ENCODE measurements at regions of chr5 and their contacts with region 1.

Region 1: DNA sequence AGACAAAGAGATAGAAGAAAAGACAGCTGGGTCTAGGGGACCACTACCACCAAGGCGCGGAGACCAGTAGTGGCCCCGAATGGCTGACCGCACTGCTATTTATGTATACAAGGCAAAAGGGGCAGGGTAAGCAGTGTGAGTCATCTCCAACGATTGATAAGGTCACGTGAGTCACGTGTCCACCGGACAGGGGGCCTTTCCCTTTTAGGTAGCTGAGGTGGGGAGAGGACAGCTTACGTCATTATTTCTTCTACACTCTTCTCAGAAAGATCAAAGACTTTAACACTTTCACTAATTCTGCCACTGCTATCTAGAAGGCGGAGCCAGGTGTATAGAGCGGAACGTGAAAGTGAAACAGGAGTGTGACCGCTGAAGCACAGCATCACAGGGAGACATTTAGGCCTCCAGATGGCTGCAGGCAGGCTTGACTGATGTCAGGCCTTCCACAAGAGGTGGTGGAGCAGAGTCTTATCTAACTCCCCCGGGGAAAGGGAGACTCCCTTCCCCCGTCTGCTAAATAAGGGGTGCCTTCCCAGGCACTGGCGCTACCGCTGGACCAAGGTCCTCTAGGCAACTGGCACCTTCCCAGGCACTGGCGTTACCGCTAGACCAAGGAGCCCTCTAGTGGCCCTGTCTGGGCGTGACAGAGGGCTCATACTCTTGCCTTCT is 6.1 kb upstream of the PRR16 start:
- DNase-seq: peak; percentile 52
- H3K4me3 ChIP-seq: peak overlapping the region in 1 of 3 experiments; percentile 17
- H3K27ac ChIP-seq: no peak overlapping the region
- H3K4me1 ChIP-seq: no peaks in the 10 kb centered on the region
- H3K27me3 ChIP-seq: no peaks in the 10 kb centered on the region
- CTCF ChIP-seq: peak; percentile 45 to 64
- POLR2A ChIP-seq: no peak

Region 2: GRCh38 chr5:119943148-119943547 is 514.8 kb before region 1 on chr5:
- CTCF ChIA-PET with region 1: no interaction called
- POLR2A ChIA-PET with region 1: no interaction called
- dilution Hi-C with region 1: no loop called
- intact Hi-C with region 1: loop called (anchors 1 kb)
- DNase-seq: peak; percentile 11
- H3K4me3 ChIP-seq: no peak overlapping the region
- H3K27ac ChIP-seq: no peak overlapping the region
- H3K4me1 ChIP-seq: no peaks in the 10 kb centered on the region
- H3K27me3 ChIP-seq: no peaks in the 10 kb centered on the region
- CTCF ChIP-seq: no peak
- POLR2A ChIP-seq: no peak

Region 3: DNA sequence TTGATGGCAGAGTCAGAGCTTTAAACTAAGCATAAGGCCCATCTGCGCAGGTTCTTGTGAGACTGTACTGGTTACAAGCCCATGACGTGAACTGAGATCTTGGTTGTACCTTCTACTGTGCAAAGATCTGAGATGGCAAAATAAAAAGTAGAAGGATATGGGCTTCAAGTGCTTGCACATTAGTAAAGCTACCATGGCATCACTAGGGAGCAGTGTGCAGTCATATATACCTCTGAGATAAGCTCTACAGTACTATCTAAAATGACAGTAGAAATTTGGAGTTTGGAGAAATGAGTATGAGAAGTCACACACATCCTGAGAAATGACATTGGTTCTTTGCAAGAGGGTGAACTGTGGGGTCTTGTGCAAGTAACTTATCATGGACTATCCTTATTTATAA is 402.1 kb before region 1 on chr5:
- CTCF ChIA-PET with region 1: interaction called, 20 read pairs
- POLR2A ChIA-PET with region 1: no interaction called
- dilution Hi-C with region 1: no loop called
- intact Hi-C with region 1: no loop called
- DNase-seq: peak; percentile 17
- H3K4me3 ChIP-seq: no peak overlapping the region
- H3K27ac ChIP-seq: no peak overlapping the region
- H3K4me1 ChIP-seq: no peaks in the 10 kb centered on the region
- H3K27me3 ChIP-seq: no peaks in the 10 kb centered on the region
- CTCF ChIP-seq: no peak
- POLR2A ChIP-seq: no peak

Region 4: DNA sequence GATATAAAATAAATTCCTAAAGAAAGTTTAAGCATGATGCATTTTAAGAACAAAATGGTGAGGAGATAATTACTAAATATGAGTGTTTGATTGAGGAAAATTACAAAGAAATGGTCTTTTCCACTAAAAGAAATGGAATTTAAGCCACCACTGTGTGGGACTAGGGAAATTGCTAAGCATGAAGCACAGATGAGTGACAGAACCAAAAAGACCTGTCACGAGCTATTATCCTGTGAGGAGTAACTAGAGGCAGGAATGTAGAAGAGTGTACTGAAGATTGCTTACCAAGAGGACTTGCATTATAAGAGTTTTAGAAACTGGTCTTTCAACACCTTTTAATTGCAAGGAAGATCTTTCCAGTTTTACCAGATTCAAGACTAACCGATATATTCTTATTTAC is 187.5 kb before region 1 on chr5:
- CTCF ChIA-PET with region 1: no interaction called
- POLR2A ChIA-PET with region 1: no interaction called
- dilution Hi-C with region 1: no loop called
- intact Hi-C with region 1: no loop called
- DNase-seq: no peak
- H3K4me3 ChIP-seq: no peak overlapping the region
- H3K27ac ChIP-seq: no peak overlapping the region
- H3K4me1 ChIP-seq: no peaks in the 10 kb centered on the region
- H3K27me3 ChIP-seq: no peaks in the 10 kb centered on the region
- CTCF ChIP-seq: no peak
- POLR2A ChIP-seq: no peak